ENCODE measurements at regions of chrX and their contacts with region 1.

Region 1: DNA sequence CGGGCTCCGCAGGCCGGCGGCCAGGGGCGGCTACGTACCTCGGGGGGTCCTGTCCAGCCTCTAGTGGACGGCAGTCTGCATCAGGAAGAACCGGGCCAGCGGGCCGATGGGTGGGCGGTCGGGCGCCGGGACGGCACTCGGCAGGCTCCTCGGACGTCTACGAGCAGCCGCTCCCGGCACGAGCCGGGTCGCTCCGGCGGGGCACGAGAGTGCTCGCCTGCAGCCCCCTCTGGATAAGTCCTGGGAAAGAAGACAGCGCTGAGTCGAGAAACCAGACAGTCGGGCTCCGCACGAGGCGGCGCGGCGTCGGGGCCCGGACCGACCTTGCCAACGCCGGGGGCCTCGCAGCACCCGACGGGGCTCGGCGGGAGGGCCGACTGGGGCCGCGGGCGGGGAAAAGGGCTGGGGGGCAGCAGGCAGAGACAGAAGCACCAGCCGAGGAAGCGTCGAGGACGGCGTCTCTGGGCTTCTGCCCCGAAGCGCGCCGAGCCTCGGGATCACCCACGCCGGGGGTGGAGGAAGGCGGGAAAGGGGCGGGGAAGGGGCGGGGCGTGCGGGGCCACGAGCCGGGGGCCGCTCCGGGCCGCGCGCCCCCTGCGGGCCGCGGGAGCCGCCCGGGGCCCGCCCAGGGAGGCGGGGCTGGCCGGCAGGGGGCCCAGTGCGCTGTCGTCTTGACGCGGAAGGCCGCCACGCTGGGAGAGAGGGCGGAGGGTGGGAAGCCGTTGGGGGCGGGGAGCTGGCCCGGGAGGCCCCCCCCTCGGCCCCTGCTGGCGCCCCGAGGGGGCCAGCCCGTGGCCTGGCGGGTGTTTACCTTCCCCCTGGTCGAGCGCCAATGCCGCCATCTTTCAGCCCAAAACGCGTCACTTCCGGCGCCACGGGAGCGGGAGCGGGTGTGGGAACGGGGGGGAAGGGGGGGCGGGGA is 1.9 kb downstream of the KLHL15 start:
- DNase-seq: peak; percentile 73
- ATAC-seq: peak; percentile 85
- H3K4me3 ChIP-seq: peak overlapping the region; percentile 77 to 83 (median 80)
- H3K27ac ChIP-seq: peak overlapping the region; percentile 90
- H3K4me1 ChIP-seq: peaks cover 9% of the 10 kb centered on the region; the same call in 1 of the 2 replicates
- H3K27me3 ChIP-seq: no peaks in the 10 kb centered on the region; a peak in 1 of 5 replicates
- CTCF ChIP-seq: peak; percentile 39; the same call in 1 of the 2 replicates
- EP300 ChIP-seq: peak in 1 of 2 experiments; percentile 32; a peak in 1 of 4 replicates
- POLR2A ChIP-seq: peak; percentile 89 to 98
- RAD21 ChIP-seq: no peak

Region 2: GRCh38 chrX:23907498-23908218 is 117.4 kb before region 1 on chrX and contains the starts of genes APOO and CXorf58:
- CTCF ChIA-PET with region 1: no interaction called
- POLR2A ChIA-PET with region 1: interaction called, 3 read pairs
- in situ Hi-C with region 1: no loop called
- intact Hi-C with region 1: loop called (anchors 2 kb)
- DNase-seq: peak; percentile 81
- ATAC-seq: peak; percentile 96
- H3K4me3 ChIP-seq: peak within 1 kb of the TSS; percentile 65 to 75 (median 69)
- H3K27ac ChIP-seq: peak within 1 kb of the TSS; percentile 86
- H3K4me1 ChIP-seq: peaks cover 29% of the 10 kb centered on the region
- H3K27me3 ChIP-seq: no peaks in the 10 kb centered on the region
- CTCF ChIP-seq: peak; percentile 76
- EP300 ChIP-seq: no peak
- POLR2A ChIP-seq: peak in 1 of 2 experiments; percentile 40; a peak in 1 of 4 replicates
- RAD21 ChIP-seq: peak; percentile 41
- total RNA-seq, gene APOO: 22.1 and 27.8 TPM in 2 replicates
- total RNA-seq, gene CXorf58: not detected in 2 replicates

Region 3: DNA sequence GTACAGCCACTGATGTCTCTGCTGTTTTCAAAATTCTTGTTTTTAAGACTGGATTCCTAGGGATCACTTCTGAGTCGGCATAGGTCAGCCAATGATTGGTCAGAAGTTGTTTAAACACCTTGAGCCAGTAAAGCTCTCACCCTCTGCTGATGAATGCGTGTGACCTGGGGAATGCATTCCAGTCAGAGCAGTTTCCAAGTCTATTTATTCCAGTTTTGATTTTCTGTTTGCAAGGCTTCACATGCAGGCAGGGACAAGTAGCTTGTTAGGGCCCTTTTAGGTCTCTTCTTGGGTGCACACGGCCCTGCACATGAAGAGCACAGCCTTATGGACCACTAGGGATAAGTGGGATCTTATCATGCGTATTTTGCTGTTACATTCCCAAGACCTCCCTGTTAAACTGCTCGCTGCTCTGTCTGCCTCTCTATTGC is 45.1 kb before region 1 on chrX:
- CTCF ChIA-PET with region 1: no interaction called
- POLR2A ChIA-PET with region 1: no interaction called
- in situ Hi-C with region 1: no loop called
- intact Hi-C with region 1: no loop called
- DNase-seq: no peak
- ATAC-seq: peak; percentile 33; the same call in 2 of the 3 replicates
- H3K4me3 ChIP-seq: no peak overlapping the region
- H3K27ac ChIP-seq: no peak overlapping the region
- H3K4me1 ChIP-seq: no peaks in the 10 kb centered on the region
- H3K27me3 ChIP-seq: no peaks in the 10 kb centered on the region
- CTCF ChIP-seq: no peak
- EP300 ChIP-seq: no peak
- POLR2A ChIP-seq: no peak
- RAD21 ChIP-seq: no peak

Measured in HepG2 (cell line).